Naive thymus-derived CD4-positive, alpha-beta T cell (primary cell): ENCODE measurements at regions of chr5 and their contacts with region 1.

Region 1: GRCh38 chr5:150846654-150847333 is 473 bp downstream of the IRGM start:
- DNase-seq: peak; percentile 17 to 83 (median 77)
- ATAC-seq: peak; percentile 98
- H3K4me3 ChIP-seq: peak overlapping the region; percentile 38
- H3K4me3 Mint-ChIP-seq: peak overlapping the region; percentile 65 to 93 (median 88)
- H3K27ac ChIP-seq: peak overlapping the region; percentile 52
- H3K27ac Mint-ChIP-seq: peak overlapping the region; percentile 65 to 94 (median 88)
- H3K4me1 ChIP-seq: no peaks in the 10 kb centered on the region
- H3K4me1 Mint-ChIP-seq: peaks cover 6 to 30% (median 19%) of the 10 kb centered on the region in 7 donors
- H3K27me3 ChIP-seq: no peaks in the 10 kb centered on the region
- H3K27me3 Mint-ChIP-seq: peaks cover 0 to 5% (median 0%) of the 10 kb centered on the region in 5 donors

Region 2: DNA sequence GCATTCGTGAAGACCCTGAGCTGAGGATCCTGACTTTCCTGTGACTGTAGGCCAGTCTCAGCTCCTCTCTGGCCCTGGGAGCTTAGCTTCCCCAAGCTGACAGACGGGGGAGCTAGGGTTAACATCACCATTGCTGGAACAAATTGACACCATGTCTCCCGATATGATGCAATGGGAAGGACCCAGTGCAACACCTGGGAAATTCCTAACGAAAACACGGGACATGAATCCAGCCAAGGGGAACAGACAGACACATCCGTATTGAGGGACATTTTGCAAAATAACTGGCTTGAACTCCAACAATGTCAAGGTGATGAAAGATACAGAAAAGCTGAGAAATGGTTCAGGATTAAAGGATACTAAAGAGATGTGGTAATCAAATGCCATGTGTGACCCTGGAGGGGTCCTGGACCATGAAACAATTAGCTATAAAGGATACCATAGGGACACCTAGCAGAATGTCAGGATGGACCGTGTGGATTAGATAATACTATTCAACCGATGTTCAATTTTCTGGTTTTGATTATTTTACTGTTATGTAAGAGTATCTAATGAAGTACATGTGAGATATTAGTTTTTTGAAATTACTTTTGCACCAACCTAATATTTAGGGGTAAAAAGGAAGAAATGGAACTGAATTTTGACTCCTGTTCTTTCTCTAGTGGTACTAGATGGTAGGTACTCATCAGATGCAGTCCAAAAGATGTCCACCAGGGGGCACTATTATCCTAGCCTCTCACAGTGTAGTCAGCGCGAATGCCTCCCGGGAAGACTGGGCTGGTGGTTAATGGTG is 286.2 kb before region 1 on chr5:
- CTCF ChIA-PET with region 1: interaction called, 47 read pairs
- POLR2A ChIA-PET with region 1: interaction called, 3 read pairs
- intact Hi-C with region 1: loop called (anchors 1 kb)
- DNase-seq: peak; percentile 48 to 86 (median 78)
- ATAC-seq: peak; percentile 98
- H3K4me3 ChIP-seq: no peak overlapping the region
- H3K4me3 Mint-ChIP-seq: no peak overlapping the region
- H3K27ac ChIP-seq: no peak overlapping the region
- H3K27ac Mint-ChIP-seq: no peak overlapping the region
- H3K4me1 ChIP-seq: no peaks in the 10 kb centered on the region
- H3K4me1 Mint-ChIP-seq: peaks cover 0 to 3% (median 0%) of the 10 kb centered on the region in 7 donors
- H3K27me3 ChIP-seq: no peaks in the 10 kb centered on the region
- H3K27me3 Mint-ChIP-seq: peaks cover 0 to 10% (median 0%) of the 10 kb centered on the region in 5 donors

Region 3: GRCh38 chr5:150656191-150657132 is 190.3 kb before region 1 on chr5:
- CTCF ChIA-PET with region 1: interaction called, 9 read pairs
- POLR2A ChIA-PET with region 1: no interaction called
- intact Hi-C with region 1: loop called (anchors 1 to 2 kb)
- DNase-seq: peak; percentile 74 to 88 (median 83)
- ATAC-seq: peak; percentile 96
- H3K4me3 ChIP-seq: peak overlapping the region; percentile 75
- H3K4me3 Mint-ChIP-seq: peak overlapping the region; percentile 75 to 90 (median 84)
- H3K27ac ChIP-seq: peak overlapping the region; percentile 63
- H3K27ac Mint-ChIP-seq: peak overlapping the region in 7 of 9 donors; percentile 17 to 74 (median 54)
- H3K4me1 ChIP-seq: peaks cover 0 to 4% of the 10 kb centered on the region in 2 donors
- H3K4me1 Mint-ChIP-seq: peaks cover 0 to 12% (median 5%) of the 10 kb centered on the region in 7 donors
- H3K27me3 ChIP-seq: no peaks in the 10 kb centered on the region
- H3K27me3 Mint-ChIP-seq: peaks cover 0 to 19% (median 0%) of the 10 kb centered on the region in 5 donors

Region 4: GRCh38 chr5:150758531-150759333 is 88.1 kb before region 1 on chr5 and contains the start of gene DCTN4:
- CTCF ChIA-PET with region 1: interaction called, 5 read pairs
- POLR2A ChIA-PET with region 1: interaction called, 5 read pairs
- intact Hi-C with region 1: loop called (anchors 1 kb)
- DNase-seq: peak; percentile 84 to 96 (median 94)
- ATAC-seq: peak; percentile 95
- H3K4me3 ChIP-seq: peak within 1 kb of the TSS; percentile 86
- H3K4me3 Mint-ChIP-seq: peak within 1 kb of the TSS in 3 of 10 donors; percentile 23 to 46 (median 36)
- H3K27ac ChIP-seq: peak within 1 kb of the TSS; percentile 96
- H3K27ac Mint-ChIP-seq: peak within 1 kb of the TSS in 1 of 9 donors; percentile 62
- H3K4me1 ChIP-seq: peaks cover 5 to 16% of the 10 kb centered on the region in 2 donors
- H3K4me1 Mint-ChIP-seq: peaks cover 22 to 54% (median 36%) of the 10 kb centered on the region in 7 donors
- H3K27me3 ChIP-seq: no peaks in the 10 kb centered on the region
- H3K27me3 Mint-ChIP-seq: peaks cover 0 to 5% (median 0%) of the 10 kb centered on the region in 5 donors
- total RNA-seq, gene DCTN4: 42.4 to 88.2 (median 46.9) TPM

Region 5: DNA sequence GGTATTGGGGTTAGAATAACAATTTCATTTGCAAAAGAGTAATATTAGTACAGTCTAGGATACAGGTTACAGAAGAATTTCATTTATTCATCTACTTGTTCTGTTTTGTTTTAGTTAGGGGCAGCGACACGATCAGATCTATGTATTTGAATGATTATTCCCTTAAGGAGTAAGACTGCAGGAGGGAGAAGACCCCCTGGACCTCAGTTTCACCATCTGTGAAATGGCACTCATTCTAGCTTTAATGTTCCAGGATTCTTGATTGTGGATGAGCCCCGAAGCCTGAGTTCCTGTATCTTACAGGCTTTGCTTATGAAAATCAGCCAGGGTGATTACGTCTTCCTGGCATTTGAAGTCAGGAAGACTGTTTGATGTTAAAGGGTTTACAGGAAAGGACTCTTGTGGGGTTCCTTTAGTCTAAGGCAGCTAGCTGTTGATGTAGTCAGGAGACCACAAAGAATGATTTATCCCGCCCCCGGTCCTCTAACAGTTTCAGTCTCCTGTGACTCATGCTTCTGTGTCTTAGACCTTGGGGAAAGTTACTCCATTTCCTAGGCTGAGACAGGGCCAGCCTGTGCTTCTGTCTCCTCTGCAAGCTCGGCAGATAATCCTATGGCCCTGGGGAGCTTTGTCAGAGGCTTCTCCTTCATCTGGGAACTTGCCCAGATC is 56.7 kb before region 1 on chr5:
- CTCF ChIA-PET with region 1: interaction called, 5 read pairs
- POLR2A ChIA-PET with region 1: interaction called, 10 read pairs
- intact Hi-C with region 1: no loop called
- DNase-seq: peak in 8 of 9 donors; percentile 37 to 73 (median 63)
- ATAC-seq: peak; percentile 94
- H3K4me3 ChIP-seq: no peak overlapping the region
- H3K4me3 Mint-ChIP-seq: peak overlapping the region; percentile 46 to 77 (median 66)
- H3K27ac ChIP-seq: peak overlapping the region; percentile 19
- H3K27ac Mint-ChIP-seq: peak overlapping the region; percentile 63 to 95 (median 85)
- H3K4me1 ChIP-seq: peaks cover 0 to 15% of the 10 kb centered on the region in 2 donors
- H3K4me1 Mint-ChIP-seq: peaks cover 21 to 64% (median 56%) of the 10 kb centered on the region in 7 donors
- H3K27me3 ChIP-seq: no peaks in the 10 kb centered on the region
- H3K27me3 Mint-ChIP-seq: no peaks in the 10 kb centered on the region

Region 6: DNA sequence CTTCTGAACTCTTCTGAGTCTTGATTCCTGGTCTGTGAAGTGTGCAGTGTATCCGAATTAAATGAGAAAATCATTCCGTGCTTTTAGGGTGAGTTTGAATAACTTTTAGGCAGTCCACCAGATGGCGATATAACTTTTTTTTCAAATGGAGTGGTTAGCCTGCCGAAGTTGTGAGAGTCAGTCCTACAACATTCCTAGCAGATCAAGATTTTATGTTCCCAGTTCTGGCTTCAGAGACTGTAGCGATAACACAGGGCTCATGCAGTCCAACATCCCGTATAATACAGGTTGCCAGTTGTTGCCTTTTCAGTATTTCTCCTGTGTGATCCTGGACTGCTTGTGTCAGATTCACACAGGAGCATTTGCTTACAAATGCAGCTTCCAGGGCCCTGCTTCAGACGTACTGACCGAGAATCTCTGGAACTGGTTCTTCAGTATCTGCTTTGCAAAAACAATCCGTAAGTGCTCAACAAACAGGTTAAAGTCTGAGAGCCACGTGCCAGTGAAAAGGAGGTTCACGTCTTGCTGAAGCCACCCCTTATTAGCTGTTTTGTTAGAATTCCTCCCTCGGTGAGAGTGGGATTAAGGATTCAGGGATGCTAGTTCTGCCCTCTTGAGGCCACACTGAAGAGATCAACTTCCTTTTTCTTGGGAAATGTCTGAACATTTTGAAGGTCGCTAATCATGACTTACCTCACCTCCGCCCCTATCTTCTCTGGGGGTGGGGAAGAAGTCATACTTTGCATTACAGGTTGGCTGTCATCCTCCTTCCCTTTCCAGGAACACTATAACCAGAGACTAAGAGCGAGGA is 45.5 kb before region 1 on chr5:
- CTCF ChIA-PET with region 1: interaction called, 59 read pairs
- POLR2A ChIA-PET with region 1: interaction called, 6 read pairs
- intact Hi-C with region 1: loop called (anchors 1 kb)
- DNase-seq: peak in 7 of 9 donors; percentile 25 to 53 (median 43)
- ATAC-seq: peak; percentile 55
- H3K4me3 ChIP-seq: no peak overlapping the region
- H3K4me3 Mint-ChIP-seq: peak overlapping the region in 1 of 10 donors; percentile 18
- H3K27ac ChIP-seq: no peak overlapping the region
- H3K27ac Mint-ChIP-seq: no peak overlapping the region
- H3K4me1 ChIP-seq: no peaks in the 10 kb centered on the region
- H3K4me1 Mint-ChIP-seq: peaks cover 0 to 18% (median 5%) of the 10 kb centered on the region in 7 donors
- H3K27me3 ChIP-seq: no peaks in the 10 kb centered on the region
- H3K27me3 Mint-ChIP-seq: peaks cover 0 to 16% (median 5%) of the 10 kb centered on the region in 5 donors

Region 7: DNA sequence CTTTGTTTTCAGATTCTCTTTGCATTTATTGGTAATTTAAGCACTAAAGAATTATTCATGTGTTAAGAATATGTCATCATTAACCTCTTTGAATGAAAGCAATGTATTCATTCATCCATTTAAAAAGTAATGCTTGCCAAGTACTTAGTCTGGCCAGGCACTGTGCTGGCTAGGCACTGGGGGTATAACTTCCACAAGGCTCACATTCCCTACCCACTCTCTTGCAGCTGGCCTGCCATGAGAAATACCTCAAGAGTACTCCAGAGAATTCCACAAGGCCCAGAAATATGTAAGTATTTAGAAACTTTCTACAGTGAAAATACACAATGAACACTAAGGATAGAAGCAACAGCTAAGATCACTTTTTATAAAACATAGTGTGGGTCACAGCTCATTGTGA is 32.6 kb after region 1 on chr5:
- CTCF ChIA-PET with region 1: no interaction called
- POLR2A ChIA-PET with region 1: no interaction called
- intact Hi-C with region 1: no loop called
- DNase-seq: no peak
- ATAC-seq: no peak
- H3K4me3 ChIP-seq: no peak overlapping the region
- H3K4me3 Mint-ChIP-seq: no peak overlapping the region
- H3K27ac ChIP-seq: no peak overlapping the region
- H3K27ac Mint-ChIP-seq: no peak overlapping the region
- H3K4me1 ChIP-seq: no peaks in the 10 kb centered on the region
- H3K4me1 Mint-ChIP-seq: no peaks in the 10 kb centered on the region
- H3K27me3 ChIP-seq: no peaks in the 10 kb centered on the region
- H3K27me3 Mint-ChIP-seq: no peaks in the 10 kb centered on the region

Region 8: DNA sequence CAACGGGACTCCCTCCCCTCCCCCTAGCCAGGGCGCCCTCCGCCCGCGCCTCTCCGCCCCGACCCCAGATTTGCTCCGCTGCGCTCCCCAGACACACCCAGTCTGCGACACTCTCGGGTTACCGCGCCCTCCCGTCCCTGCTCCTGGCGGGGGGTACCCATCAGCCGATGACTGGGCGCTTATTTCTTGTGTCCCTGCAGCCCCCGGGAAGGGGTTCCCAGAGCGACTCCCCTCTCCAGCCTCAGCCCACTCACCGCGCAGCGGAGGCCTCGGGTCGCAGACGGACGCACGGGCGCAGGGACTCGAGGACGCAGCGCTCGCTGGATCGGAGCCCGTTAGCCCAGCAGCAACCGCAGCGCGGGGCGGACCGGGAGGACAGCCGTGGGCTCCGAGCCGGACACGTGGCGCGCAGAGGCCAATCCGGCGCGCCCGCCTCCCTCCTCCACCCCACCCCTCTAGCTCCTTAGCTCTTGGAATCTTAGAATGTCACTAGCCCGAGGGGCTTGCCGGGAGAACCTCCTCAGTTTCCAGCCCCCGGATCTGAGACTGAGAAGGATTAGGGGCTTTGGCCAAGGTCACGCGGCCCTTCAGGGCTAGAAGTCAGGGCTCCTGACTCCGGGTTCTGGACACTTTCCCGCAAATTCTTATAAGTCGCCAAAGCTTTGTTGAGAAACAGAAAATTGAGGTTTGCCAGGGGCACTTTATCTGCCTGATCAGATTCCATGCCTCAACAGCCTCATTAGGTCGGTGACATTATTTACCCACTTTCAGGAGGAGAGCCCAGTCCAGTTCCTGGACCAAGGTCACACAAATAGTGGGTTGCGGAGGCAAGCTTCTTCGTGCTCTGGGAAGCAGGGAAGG is 310.9 kb after region 1 on chr5 and contains the start of gene ANXA6:
- CTCF ChIA-PET with region 1: no interaction called
- POLR2A ChIA-PET with region 1: no interaction called
- intact Hi-C with region 1: loop called in 1 of 2 experiments (anchors 5 kb)
- DNase-seq: peak; percentile 48 to 79 (median 57)
- ATAC-seq: peak; percentile 92
- H3K4me3 ChIP-seq: peak within 1 kb of the TSS; percentile 85
- H3K4me3 Mint-ChIP-seq: peak within 1 kb of the TSS; percentile 94 to 99 (median 96)
- H3K27ac ChIP-seq: peak within 1 kb of the TSS; percentile 92
- H3K27ac Mint-ChIP-seq: peak within 1 kb of the TSS; percentile 90 to 99 (median 96)
- H3K4me1 ChIP-seq: peaks cover 36 to 44% of the 10 kb centered on the region in 2 donors
- H3K4me1 Mint-ChIP-seq: peaks cover 39 to 69% (median 57%) of the 10 kb centered on the region in 7 donors
- H3K27me3 ChIP-seq: no peaks in the 10 kb centered on the region
- H3K27me3 Mint-ChIP-seq: no peaks in the 10 kb centered on the region
- total RNA-seq, gene ANXA6: 212 to 512 (median 272) TPM